ENCODE measurements at regions of chr7 and their contacts with region 1.

Region 1: GRCh38 chr7:114426382-114427223 is 12.0 kb downstream of the FOXP2 start:
- DNase-seq: peak; percentile 49
- H3K4me3 ChIP-seq: no peak overlapping the region
- H3K27ac ChIP-seq: no peak overlapping the region
- H3K4me1 ChIP-seq: no peaks in the 10 kb centered on the region
- H3K27me3 ChIP-seq: no peaks in the 10 kb centered on the region
- CTCF ChIP-seq: peak in 1 of 2 donors; percentile 29
- POLR2A ChIP-seq: no peak

Region 2: DNA sequence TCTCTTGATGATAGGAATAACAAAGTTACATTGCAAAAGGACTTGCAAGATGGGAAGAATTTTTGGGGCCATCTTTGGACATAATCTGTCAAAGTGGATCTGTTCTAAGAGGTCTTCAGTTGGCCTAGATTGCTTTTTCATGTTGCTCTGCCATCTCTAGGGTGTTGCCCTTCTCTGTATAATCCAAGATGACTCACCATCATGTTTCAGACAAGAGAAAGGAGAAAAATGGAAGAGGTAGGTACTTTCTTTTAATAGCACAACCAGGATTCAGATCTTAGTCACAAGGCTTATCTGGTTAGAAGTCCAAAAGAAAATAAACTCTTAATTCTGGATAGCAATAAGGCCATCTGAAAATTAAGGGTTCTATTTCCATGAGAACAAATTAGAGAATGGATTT is 50.7 kb before region 1 on chr7:
- CTCF ChIA-PET with region 1: no interaction called
- POLR2A ChIA-PET with region 1: no interaction called
- dilution Hi-C with region 1: no loop called
- intact Hi-C with region 1: no loop called
- DNase-seq: no peak
- H3K4me3 ChIP-seq: no peak overlapping the region
- H3K27ac ChIP-seq: no peak overlapping the region
- H3K4me1 ChIP-seq: no peaks in the 10 kb centered on the region
- H3K27me3 ChIP-seq: peaks cover 0 to 2% of the 10 kb centered on the region in 2 experiments
- CTCF ChIP-seq: no peak
- POLR2A ChIP-seq: no peak

Region 3: GRCh38 chr7:114414156-114415063 is 12.2 kb before region 1 on chr7 and contains the start of gene FOXP2:
- CTCF ChIA-PET with region 1: interaction called, 28 read pairs
- POLR2A ChIA-PET with region 1: no interaction called
- dilution Hi-C with region 1: no loop called
- intact Hi-C with region 1: no loop called
- DNase-seq: peak; percentile 19
- H3K4me3 ChIP-seq: peak within 1 kb of the TSS in 1 of 3 experiments; percentile 46
- H3K27ac ChIP-seq: no peak within 1 kb of the TSS
- H3K4me1 ChIP-seq: no peaks in the 10 kb centered on the region
- H3K27me3 ChIP-seq: peaks cover 2% of the 10 kb centered on the region in 2 experiments
- CTCF ChIP-seq: no peak
- POLR2A ChIP-seq: no peak
- total RNA-seq, gene FOXP2: 2.7 and 3.3 TPM in 2 replicates

Region 4: GRCh38 chr7:114450431-114450830 is 23.8 kb after region 1 on chr7:
- CTCF ChIA-PET with region 1: interaction called, 28 read pairs
- POLR2A ChIA-PET with region 1: no interaction called
- dilution Hi-C with region 1: no loop called
- intact Hi-C with region 1: no loop called
- DNase-seq: no peak
- H3K4me3 ChIP-seq: no peak overlapping the region
- H3K27ac ChIP-seq: no peak overlapping the region
- H3K4me1 ChIP-seq: no peaks in the 10 kb centered on the region
- H3K27me3 ChIP-seq: no peaks in the 10 kb centered on the region
- CTCF ChIP-seq: no peak
- POLR2A ChIP-seq: no peak

Region 5: DNA sequence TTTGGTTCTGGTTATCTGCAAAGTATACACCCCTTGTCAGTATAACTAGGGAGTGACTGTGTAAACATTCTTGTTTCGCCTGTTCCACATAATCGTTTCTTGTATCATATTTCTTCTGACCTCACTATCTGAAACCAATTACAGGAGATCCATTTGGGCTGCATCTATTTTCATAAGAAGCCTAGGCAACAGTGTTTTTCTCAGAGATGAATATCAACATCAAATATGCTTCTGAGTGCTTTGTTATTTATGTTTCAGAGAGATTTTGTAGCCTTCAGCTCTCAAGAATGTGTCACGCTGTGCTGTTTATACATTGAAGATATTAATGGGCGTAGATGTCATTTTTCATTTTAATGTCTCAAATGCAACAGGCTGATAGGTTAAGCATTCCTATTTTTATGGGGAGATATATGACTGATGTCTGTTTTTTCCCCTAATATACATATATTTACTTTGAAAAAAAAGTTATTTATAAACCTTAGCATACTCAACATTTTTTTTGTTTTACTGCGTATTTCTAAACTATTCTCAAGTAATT is 103.5 kb after region 1 on chr7:
- CTCF ChIA-PET with region 1: interaction called, 17 read pairs
- POLR2A ChIA-PET with region 1: no interaction called
- dilution Hi-C with region 1: no loop called
- intact Hi-C with region 1: no loop called
- DNase-seq: no peak
- H3K4me3 ChIP-seq: no peak overlapping the region
- H3K27ac ChIP-seq: no peak overlapping the region
- H3K4me1 ChIP-seq: no peaks in the 10 kb centered on the region
- H3K27me3 ChIP-seq: no peaks in the 10 kb centered on the region
- CTCF ChIP-seq: no peak
- POLR2A ChIP-seq: no peak

Region 6: GRCh38 chr7:114663502-114663901 is 236.9 kb after region 1 on chr7:
- CTCF ChIA-PET with region 1: interaction called, 81 read pairs
- POLR2A ChIA-PET with region 1: no interaction called
- dilution Hi-C with region 1: no loop called
- intact Hi-C with region 1: loop called (anchors 1 kb)
- DNase-seq: peak; percentile 35
- H3K4me3 ChIP-seq: no peak overlapping the region
- H3K27ac ChIP-seq: no peak overlapping the region
- H3K4me1 ChIP-seq: no peaks in the 10 kb centered on the region
- H3K27me3 ChIP-seq: no peaks in the 10 kb centered on the region
- CTCF ChIP-seq: peak in 1 of 2 donors; percentile 30
- POLR2A ChIP-seq: no peak